Lower leg skin (tissue), 4 donors: ENCODE measurements at regions of chr16 and their contacts with region 1.

Region 1: DNA sequence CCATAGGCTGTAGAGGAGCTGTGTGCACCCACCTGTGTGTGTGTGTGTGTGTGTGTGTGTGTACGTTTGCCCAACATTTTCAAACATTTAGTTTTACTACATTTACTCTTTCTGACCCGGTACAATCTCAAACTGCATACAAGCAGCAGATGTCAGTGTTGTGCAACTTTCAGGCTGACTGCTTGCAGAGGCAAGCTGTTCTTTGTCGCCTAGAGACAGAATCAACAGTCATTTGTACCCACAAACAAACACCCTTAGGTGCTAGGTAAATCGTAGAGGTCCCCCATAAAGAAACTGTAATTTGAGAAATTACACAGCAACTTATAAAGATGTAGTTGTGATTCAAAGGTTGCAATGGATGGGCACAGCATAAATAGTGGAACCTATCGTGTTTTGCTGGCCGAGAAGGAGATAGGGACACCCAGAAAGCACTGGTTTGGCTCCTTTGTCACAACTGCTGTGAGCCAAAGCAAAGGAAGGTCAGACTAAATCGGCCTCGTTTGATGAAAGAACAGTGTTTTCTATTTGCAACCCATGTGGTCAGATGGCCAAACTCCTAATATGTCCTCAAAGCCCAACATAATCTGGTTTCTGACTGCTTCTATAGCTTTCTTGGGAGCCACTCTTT is 478.4 kb downstream of the TOX3 start:
- DNase-seq: no peak
- H3K4me3 ChIP-seq: no peak overlapping the region
- CTCF ChIP-seq: no peak
- POLR2A ChIP-seq: no peak

Region 2: GRCh38 chr16:51343411-51343810 is 725.1 kb before region 1 on chr16:
- intact Hi-C with region 1: no loop called
- DNase-seq: no peak
- H3K4me3 ChIP-seq: no peak overlapping the region
- CTCF ChIP-seq: no peak
- POLR2A ChIP-seq: no peak

Region 3: DNA sequence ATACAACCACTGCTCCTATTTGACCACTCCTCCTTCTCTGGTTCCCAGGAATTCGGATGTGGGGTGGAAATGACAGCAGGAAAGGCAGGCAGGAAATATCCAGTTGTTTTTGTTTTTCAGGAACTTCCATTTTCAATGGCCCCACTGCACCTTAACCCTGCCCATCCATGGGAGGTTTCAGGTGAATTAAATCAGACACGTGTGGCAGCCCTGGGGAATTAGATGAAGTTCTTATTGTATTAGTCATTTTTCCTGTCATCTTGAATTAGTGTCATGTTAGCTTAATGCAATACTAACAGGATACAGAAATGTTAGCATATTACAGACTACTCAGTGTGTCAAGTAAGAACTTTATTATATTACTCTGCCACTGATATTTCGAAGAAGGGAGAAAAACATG is 837.7 kb after region 1 on chr16:
- intact Hi-C with region 1: loop called (anchors 5 kb)
- DNase-seq: no peak
- H3K4me3 ChIP-seq: no peak overlapping the region
- CTCF ChIP-seq: no peak
- POLR2A ChIP-seq: no peak

Region 4: GRCh38 chr16:53014287-53014686 is 945.7 kb after region 1 on chr16:
- intact Hi-C with region 1: loop called (anchors 10 kb)
- DNase-seq: no peak
- H3K4me3 ChIP-seq: no peak overlapping the region
- CTCF ChIP-seq: no peak
- POLR2A ChIP-seq: no peak